Activated B cell treated with CpG ODN at 0.5 μM for 24 hours (primary cell): ENCODE measurements at regions of chr12 and their contacts with region 1.

Region 1: DNA sequence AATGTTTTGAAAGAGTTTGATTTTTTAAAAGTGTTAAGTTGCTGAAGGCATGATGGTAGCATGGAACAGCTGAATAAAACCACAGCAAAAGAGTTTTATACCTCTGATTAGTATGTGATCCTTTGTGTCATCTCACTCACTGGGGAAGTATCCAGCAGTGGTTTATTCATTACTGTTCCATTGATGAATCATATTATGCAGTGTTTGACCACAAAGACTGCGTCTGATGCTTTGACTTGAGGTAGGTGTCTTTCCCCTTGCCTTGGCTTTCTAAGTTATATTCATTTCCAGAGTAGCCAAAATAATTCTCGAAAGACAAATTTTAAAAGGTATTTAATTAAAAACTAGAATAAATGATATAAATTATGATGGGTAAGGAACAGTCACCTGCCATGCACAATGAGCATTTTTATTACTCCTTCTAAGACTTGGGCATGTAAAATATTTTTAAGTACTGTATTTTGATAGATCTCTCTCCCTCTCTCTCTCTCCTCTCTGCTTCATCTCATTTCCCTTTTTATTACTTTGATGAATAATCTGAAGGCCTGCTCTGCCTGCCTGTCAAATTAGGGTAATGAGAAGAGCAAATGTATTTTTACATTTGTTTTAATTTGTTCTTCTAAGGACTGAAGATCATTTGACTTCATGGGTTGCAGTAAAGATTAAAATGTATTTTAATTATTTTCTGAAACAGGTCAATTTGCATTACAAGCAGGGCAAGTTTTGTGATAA is 164.9 kb downstream of the NAV3 start:
- DNase-seq: no peak
- ATAC-seq: peak; percentile 56
- H3K4me3 Mint-ChIP-seq: no peak overlapping the region
- H3K27ac Mint-ChIP-seq: peak overlapping the region; percentile 47
- H3K4me1 Mint-ChIP-seq: peaks cover 28% of the 10 kb centered on the region
- H3K27me3 Mint-ChIP-seq: no peaks in the 10 kb centered on the region
- CTCF ChIP-seq: no peak

Region 2: DNA sequence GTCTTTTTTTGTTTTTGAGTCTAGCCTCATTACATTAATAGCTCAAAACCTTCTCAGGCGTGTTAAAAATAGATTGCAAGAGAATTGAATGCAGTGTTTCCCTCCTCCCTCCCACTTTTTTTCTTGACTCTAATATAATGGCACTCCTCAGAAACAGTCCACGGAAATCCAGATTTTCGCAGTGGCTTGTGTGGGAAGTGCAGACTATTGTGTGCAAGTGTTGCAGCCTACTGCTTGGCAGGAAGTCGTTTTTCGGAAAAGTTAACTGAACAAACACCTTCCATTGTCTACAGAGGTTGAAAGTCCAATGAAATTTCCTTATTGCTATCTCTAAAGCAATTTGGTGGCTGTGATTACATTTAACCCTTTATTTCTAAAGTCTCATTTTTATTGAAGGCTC is 782.3 kb before region 1 on chr12:
- CTCF ChIA-PET with region 1: no interaction called
- POLR2A ChIA-PET with region 1: no interaction called
- intact Hi-C with region 1: no loop called
- DNase-seq: no peak
- ATAC-seq: no peak
- H3K4me3 Mint-ChIP-seq: no peak overlapping the region
- H3K27ac Mint-ChIP-seq: no peak overlapping the region
- H3K4me1 Mint-ChIP-seq: no peaks in the 10 kb centered on the region
- H3K27me3 Mint-ChIP-seq: no peaks in the 10 kb centered on the region
- CTCF ChIP-seq: no peak

Region 3: GRCh38 chr12:78120866-78121560 is 125.4 kb after region 1 on chr12:
- CTCF ChIA-PET with region 1: no interaction called
- POLR2A ChIA-PET with region 1: no interaction called
- intact Hi-C with region 1: loop called (anchors 1 kb)
- DNase-seq: no peak
- ATAC-seq: no peak
- H3K4me3 Mint-ChIP-seq: no peak overlapping the region
- H3K27ac Mint-ChIP-seq: no peak overlapping the region
- H3K4me1 Mint-ChIP-seq: no peaks in the 10 kb centered on the region
- H3K27me3 Mint-ChIP-seq: no peaks in the 10 kb centered on the region
- CTCF ChIP-seq: no peak

Region 4: DNA sequence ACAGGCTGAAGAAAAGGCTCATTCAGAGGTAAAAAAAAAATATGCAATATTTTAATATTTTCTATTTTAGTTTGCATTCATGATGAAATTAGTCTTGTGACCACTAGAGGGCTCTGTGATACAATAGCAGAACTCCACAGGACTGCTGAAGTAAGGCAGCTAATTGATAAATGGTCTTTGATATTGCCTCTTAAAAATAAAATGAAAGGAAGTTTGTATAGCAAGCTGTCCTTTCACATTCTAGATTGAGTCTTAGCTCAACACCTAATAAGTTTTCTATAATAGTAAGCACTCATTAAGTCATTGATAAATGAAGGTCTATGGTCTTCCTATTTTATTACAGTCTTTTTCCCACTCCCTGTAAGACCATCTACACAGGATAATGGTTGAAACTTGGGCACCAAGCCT is 150.8 kb after region 1 on chr12:
- CTCF ChIA-PET with region 1: no interaction called
- POLR2A ChIA-PET with region 1: no interaction called
- intact Hi-C with region 1: loop called (anchors 2 kb)
- DNase-seq: no peak
- ATAC-seq: peak; percentile 47
- H3K4me3 Mint-ChIP-seq: no peak overlapping the region
- H3K27ac Mint-ChIP-seq: no peak overlapping the region
- H3K4me1 Mint-ChIP-seq: no peaks in the 10 kb centered on the region
- H3K27me3 Mint-ChIP-seq: no peaks in the 10 kb centered on the region
- CTCF ChIP-seq: peak; percentile 69

Region 5: DNA sequence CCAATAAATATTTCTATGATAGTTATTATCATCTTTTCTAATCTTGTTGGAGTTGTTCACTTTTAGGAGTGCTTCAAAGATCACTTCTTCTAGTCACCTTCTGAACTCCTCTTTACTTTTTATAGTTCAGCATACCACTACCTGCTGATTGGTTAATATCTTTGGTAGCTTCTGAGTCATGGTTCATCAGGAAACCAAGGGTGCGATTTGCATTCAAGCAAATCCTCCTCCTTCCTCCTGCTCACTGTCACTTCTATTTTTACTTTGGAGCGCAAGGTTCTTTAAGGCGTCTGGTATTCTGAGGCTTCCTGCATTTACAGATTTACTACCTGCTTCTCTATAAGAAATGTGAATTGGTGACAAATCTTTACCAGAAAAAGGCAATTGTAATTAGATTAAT is 893.0 kb after region 1 on chr12:
- CTCF ChIA-PET with region 1: no interaction called
- POLR2A ChIA-PET with region 1: no interaction called
- intact Hi-C with region 1: loop called (anchors 5 kb)
- DNase-seq: no peak
- ATAC-seq: peak; percentile 95
- H3K4me3 Mint-ChIP-seq: peak overlapping the region; percentile 56
- H3K27ac Mint-ChIP-seq: no peak overlapping the region
- H3K4me1 Mint-ChIP-seq: peaks cover 23% of the 10 kb centered on the region
- H3K27me3 Mint-ChIP-seq: no peaks in the 10 kb centered on the region
- CTCF ChIP-seq: no peak

Region 6: GRCh38 chr12:79174626-79175025 is 1179.0 kb after region 1 on chr12:
- CTCF ChIA-PET with region 1: no interaction called
- POLR2A ChIA-PET with region 1: no interaction called
- intact Hi-C with region 1: loop called (anchors 1 kb)
- DNase-seq: no peak
- ATAC-seq: no peak
- H3K4me3 Mint-ChIP-seq: no peak overlapping the region
- H3K27ac Mint-ChIP-seq: no peak overlapping the region
- H3K4me1 Mint-ChIP-seq: no peaks in the 10 kb centered on the region
- H3K27me3 Mint-ChIP-seq: no peaks in the 10 kb centered on the region
- CTCF ChIP-seq: no peak

Region 7: DNA sequence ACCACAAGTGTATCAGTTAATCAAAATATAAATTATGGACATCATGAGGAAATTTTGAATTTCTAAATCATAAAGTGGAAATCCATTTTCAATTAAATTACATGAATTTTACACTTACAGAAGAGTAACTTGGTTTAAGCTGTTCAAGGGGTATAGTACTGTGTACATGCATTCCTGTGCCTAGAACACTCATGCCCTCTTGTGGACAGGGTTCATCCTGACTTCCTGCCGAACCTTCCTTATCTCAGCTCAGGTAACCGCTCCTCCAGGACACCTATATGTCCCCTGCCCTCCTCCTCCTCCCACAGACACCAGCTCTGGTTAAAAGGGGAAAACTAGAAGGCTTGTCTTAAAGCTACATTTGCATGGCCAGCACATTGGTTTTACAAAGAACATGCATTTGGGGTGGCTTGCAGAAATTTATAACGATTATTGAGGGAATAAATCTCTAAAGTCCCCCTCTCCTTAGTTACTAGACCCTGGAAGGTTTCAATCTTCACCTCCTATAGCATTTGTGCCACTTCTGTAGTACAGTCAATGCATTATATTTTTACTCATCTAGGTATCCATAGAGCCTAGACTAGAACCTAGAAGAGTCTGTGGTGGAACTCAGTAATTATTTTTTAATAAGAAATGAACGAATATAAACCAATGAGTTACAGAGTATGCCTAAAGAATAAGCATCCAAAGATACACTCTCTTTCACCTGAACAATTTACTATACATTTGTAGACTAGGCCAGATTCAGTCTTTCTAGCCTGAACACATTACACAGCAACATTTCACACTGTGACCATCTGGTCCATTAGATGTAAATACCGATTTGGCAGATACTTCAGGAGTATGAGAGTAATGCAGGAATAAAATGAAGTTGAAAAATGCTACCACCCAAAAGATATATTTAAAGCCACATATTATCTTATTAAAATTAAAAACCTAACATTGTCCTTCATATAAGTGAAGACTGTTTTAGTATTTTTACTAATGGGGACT is 1349.5 kb after region 1 on chr12:
- CTCF ChIA-PET with region 1: no interaction called
- POLR2A ChIA-PET with region 1: no interaction called
- intact Hi-C with region 1: loop called (anchors 1 kb)
- DNase-seq: no peak
- ATAC-seq: peak; percentile 40
- H3K4me3 Mint-ChIP-seq: no peak overlapping the region
- H3K27ac Mint-ChIP-seq: no peak overlapping the region
- H3K4me1 Mint-ChIP-seq: no peaks in the 10 kb centered on the region
- H3K27me3 Mint-ChIP-seq: no peaks in the 10 kb centered on the region
- CTCF ChIP-seq: no peak

Region 8: GRCh38 chr12:79373896-79374499 is 1378.4 kb after region 1 on chr12:
- CTCF ChIA-PET with region 1: no interaction called
- POLR2A ChIA-PET with region 1: no interaction called
- intact Hi-C with region 1: loop called (anchors 2 kb)
- DNase-seq: no peak
- ATAC-seq: peak; percentile 47
- H3K4me3 Mint-ChIP-seq: no peak overlapping the region
- H3K27ac Mint-ChIP-seq: no peak overlapping the region
- H3K4me1 Mint-ChIP-seq: no peaks in the 10 kb centered on the region
- H3K27me3 Mint-ChIP-seq: no peaks in the 10 kb centered on the region
- CTCF ChIP-seq: no peak